ENCODE measurements at regions of chr6 and their contacts with region 1.

Region 1: DNA sequence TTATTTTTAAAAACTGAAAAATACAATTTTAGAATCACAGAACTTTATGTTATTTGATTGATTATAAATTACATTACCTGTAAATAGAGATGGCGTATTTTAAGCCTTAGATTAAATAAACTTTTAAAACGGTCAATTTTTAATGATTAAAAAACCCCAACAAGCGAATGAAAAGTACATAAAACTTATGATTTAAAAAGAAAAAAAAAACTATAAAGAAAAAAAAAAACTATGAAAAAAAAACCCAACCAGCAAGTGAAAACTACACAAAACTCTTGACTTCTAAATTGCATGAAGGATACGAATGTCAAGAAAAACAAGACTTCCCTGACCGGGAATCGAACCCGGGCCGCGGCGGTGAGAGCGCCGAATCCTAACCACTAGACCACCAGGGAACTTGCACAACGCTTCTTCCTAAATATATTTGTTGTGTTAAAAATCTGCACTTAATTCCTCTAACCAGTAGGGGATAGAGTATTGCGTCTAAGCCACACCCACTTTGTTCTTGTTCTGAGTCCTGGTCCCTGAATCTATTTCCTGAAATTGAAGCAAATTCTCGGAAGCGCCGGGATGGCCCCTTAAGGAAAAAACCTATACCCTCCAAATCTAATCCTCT is 10.7 kb upstream of the NCOA7 start:
- H3K4me3 ChIP-seq: peak overlapping the region; percentile 85
- H3K27ac ChIP-seq: peak overlapping the region; percentile 83
- H3K4me1 ChIP-seq: no peaks in the 10 kb centered on the region
- CTCF ChIP-seq: peak; percentile 55; the same call in 1 of the 2 replicates

Region 2: GRCh38 chr6:125432982-125433381 is 347.1 kb before region 1 on chr6:
- CTCF ChIA-PET with region 1: no interaction called
- POLR2A ChIA-PET with region 1: interaction called, 10 read pairs
- H3K4me3 ChIP-seq: no peak overlapping the region
- H3K27ac ChIP-seq: no peak overlapping the region
- H3K4me1 ChIP-seq: no peaks in the 10 kb centered on the region
- CTCF ChIP-seq: no peak

Region 3: GRCh38 chr6:125790358-125791150 is 10.5 kb after region 1 on chr6 and contains the start of gene NCOA7:
- CTCF ChIA-PET with region 1: interaction called, 35 read pairs
- POLR2A ChIA-PET with region 1: interaction called, 66 read pairs
- H3K4me3 ChIP-seq: peak within 1 kb of the TSS; percentile 70
- H3K27ac ChIP-seq: peak within 1 kb of the TSS; percentile 91
- H3K4me1 ChIP-seq: peaks cover 31% of the 10 kb centered on the region
- CTCF ChIP-seq: peak; percentile 66; the same call in 1 of the 2 replicates

Region 4: GRCh38 chr6:125807293-125807692 is 27.3 kb after region 1 on chr6:
- CTCF ChIA-PET with region 1: no interaction called
- POLR2A ChIA-PET with region 1: no interaction called
- H3K4me3 ChIP-seq: no peak overlapping the region
- H3K27ac ChIP-seq: no peak overlapping the region
- H3K4me1 ChIP-seq: peaks cover 14% of the 10 kb centered on the region
- CTCF ChIP-seq: no peak

Region 5: DNA sequence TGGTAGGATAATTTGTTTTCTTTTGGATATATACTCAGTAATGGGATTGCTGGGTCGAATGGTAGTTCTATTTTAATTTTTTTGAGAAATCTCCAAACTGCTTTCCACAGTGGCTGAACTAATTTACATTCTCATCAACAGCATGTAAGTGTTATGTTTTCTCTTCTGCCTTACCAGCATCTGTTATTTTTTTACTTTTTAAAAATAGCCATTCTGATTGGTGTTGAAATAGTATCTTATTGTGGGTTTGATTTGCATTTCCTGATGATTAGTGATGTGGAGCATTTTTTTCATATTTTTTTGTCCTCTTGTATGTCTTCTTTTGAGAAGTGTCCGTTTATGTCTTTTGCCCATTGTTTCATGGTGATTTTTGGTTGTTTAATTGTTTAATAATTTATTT is 188.5 kb after region 1 on chr6:
- CTCF ChIA-PET with region 1: interaction called, 32 read pairs
- POLR2A ChIA-PET with region 1: no interaction called
- H3K4me3 ChIP-seq: no peak overlapping the region
- H3K27ac ChIP-seq: no peak overlapping the region
- H3K4me1 ChIP-seq: no peaks in the 10 kb centered on the region
- CTCF ChIP-seq: no peak

Region 6: DNA sequence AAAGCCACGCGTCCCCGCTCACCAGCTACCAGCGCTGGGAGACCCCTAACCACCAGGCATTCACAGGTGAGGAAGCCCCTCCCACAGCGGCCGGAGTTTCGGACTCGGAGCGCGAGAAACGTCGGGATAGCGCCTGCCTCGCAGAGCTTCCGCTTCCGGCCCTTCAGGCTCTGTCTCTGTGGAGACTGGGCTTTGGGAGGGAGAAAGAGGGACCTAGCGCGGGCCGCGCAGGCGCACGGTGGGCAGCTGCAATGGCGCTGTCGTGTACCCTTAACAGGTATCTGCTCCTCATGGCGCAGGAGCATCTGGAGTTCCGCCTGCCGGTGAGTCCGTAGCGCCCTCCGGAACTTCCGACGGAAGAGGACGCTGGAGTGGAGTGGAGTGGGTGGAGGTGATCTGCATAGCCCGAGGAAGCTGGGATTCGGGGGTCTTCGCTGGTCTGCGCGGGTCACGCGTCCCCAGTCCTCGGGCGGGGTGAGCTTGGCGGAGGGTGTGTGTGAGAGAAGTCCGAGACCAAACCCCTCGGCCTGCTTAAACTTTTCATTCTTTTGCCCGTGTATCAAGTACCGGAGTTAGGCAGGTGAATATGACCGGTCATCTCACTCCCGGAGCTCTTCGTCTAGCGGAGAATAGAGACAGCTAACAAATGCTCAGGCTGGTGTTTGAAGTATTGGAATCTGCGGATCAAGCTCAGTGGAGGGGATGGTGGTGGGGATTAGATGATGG is 206.4 kb after region 1 on chr6 and contains the start of gene TRMT11:
- CTCF ChIA-PET with region 1: interaction called, 4 read pairs
- POLR2A ChIA-PET with region 1: interaction called, 14 read pairs
- H3K4me3 ChIP-seq: peak within 1 kb of the TSS; percentile 81
- H3K27ac ChIP-seq: peak within 1 kb of the TSS; percentile 63
- H3K4me1 ChIP-seq: peaks cover 5% of the 10 kb centered on the region
- CTCF ChIP-seq: peak; percentile 89

Measured in HEK293 (cell line).